Cardiac septum (tissue), 1 donor: ENCODE measurements at regions of chr6 and their contacts with region 1.

Region 1: GRCh38 chr6:36594029-36594815 is at the start of gene SRSF3:
- DNase-seq: peak; percentile 98
- total RNA-seq, gene SRSF3: 148 TPM

Region 2: GRCh38 chr6:36423101-36423824 is 171.0 kb before region 1 on chr6:
- intact Hi-C with region 1: loop called (anchors 5 kb)
- DNase-seq: peak; percentile 99

Region 3: GRCh38 chr6:36442671-36443470 is 151.4 kb before region 1 on chr6 and contains the starts of genes KCTD20 and PXT1:
- intact Hi-C with region 1: loop called (anchors 1 kb)
- DNase-seq: peak; percentile 94
- total RNA-seq, gene KCTD20: 29.6 TPM
- total RNA-seq, gene PXT1: 0.22 TPM

Region 4: DNA sequence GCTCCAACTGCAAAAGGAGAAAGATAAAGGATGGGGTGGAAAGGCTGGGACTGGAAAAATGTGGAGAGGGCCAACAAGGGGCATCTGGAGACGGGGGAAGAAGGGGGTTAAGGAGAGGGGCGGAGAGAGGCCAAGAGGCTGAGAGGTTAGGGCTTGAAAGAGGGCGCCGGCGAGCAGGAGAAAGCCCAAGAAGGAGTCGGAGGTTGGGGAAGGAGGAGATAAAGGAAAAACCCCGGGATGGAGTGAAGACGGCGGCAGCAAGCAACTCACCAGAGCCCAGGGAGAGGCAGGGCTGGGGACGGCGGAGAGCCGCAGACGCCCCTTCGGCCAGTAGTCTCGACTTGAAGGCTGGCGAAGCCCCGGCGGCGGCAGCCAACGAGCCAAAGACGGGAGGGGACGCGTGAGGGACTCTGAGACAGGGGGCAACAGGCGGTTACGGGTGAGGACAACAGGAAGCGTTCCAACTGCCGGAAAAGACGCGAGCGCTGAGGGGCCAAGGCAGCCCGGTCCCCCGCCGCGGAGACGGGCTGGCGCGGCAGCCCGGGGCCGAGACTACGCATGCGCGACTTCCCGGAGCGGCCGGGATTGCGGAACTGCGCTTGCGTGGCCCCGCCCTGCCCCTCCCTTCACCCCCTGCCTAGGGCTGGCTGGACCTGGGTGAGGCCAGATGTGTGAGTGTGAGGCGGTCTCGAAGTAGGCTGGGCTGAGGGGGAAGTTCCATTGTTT is 47.1 kb before region 1 on chr6 and contains the start of gene STK38:
- intact Hi-C with region 1: loop called (anchors 2 kb)
- DNase-seq: peak; percentile 98
- total RNA-seq, gene STK38: 31.6 TPM

Region 5: DNA sequence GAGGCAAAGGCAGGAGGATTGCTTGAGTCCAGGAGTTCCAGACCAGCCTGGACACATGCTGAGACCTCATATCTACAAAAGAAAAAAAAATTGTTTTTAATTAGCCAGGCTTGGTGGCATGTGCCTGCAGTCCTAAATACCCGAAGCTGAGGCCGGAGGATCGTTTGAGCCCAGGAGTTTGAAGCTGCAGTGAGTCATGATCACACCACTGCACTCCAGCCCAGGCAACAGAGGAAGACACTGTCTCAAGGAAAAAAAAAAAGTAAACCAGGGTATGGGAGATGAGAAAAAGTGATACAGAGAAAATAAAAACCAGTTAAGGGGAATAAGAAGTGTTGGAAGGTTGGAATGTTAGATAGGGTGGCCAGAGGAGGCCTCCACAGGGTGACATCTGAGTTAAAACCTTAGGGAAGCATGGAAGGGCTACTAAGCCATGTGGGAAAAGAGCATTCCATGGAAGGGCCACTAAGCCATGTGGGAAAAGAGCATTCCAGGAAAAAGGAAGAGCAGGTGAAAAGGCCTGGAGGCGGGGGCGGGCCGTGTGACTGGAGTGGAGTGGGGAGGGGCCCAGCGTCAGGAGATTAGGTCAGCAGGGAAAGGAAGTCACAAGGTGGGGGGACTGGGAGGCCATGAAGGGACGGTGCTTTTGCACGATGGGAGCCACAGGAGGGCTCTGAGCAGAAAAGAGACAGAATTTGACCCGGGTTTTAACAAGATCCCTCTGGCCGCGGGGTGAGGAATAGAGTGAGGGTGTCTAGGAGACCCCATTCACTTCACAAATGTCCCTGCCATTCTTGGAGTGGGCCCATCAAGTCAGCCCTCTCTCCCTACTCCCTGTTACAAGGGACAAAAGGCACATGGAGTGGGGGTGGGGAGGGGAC is 226.7 kb after region 1 on chr6:
- intact Hi-C with region 1: no loop called
- DNase-seq: no peak